ENCODE measurements at regions of chr6 and their contacts with region 1.

Region 1: GRCh38 chr6:169990095-169991030 is 238.9 kb downstream of the ERMARD start:
- DNase-seq: peak; percentile 88
- ATAC-seq: peak; percentile 90
- H3K4me3 Mint-ChIP-seq: peak overlapping the region; percentile 59
- H3K27ac Mint-ChIP-seq: peak overlapping the region; percentile 77
- H3K4me1 Mint-ChIP-seq: peaks cover 27% of the 10 kb centered on the region
- H3K27me3 Mint-ChIP-seq: no peaks in the 10 kb centered on the region
- CTCF ChIP-seq: peak; percentile 30

Region 2: DNA sequence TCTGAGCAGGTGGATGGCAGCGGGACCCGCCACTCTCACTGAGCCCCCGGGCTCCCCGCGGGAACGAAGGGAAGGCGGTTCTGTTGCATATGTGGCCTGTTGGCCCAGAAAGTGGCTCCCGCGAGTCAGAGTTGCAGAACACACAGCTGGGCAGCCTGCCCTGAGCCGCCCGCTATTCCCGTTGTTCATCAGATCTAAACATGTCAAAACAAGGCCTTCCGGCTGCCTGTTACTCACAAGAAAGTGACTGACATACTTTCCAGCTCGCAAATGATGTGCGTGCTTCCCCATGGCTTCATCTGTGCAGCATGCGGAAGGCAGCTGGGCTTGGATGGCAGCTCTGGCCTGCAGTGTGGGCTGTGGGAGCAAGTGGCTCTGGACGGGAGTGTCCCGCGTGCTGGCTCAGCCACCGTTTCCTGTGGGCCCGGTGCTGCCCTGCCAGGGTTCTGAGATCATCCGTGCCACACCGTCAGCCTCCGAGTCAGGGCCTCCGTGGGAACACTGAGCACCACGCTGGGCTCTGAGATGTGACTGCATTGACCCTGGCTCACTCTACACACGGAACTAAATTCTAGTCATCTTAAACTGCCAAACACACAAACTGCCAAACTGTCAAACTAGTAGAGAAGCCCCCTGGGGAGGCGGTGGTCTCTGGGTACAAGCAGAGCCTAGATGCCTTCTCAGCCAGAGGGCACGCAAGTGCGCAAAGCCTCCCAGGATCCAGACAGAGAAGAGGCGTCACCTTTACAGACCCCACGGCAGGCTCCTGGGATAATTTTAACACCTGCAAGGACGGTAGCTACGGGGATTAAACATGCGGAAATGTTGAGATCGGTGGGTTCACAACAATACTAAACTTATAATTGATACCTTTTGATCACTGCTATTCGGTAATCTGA is 11.5 kb before region 1 on chr6:
- CTCF ChIA-PET with region 1: no interaction called
- POLR2A ChIA-PET with region 1: no interaction called
- intact Hi-C with region 1: no loop called
- DNase-seq: no peak
- ATAC-seq: no peak
- H3K4me3 Mint-ChIP-seq: no peak overlapping the region
- H3K27ac Mint-ChIP-seq: no peak overlapping the region
- H3K4me1 Mint-ChIP-seq: peaks cover 2% of the 10 kb centered on the region
- H3K27me3 Mint-ChIP-seq: peaks cover 10% of the 10 kb centered on the region
- CTCF ChIP-seq: no peak

Region 3: DNA sequence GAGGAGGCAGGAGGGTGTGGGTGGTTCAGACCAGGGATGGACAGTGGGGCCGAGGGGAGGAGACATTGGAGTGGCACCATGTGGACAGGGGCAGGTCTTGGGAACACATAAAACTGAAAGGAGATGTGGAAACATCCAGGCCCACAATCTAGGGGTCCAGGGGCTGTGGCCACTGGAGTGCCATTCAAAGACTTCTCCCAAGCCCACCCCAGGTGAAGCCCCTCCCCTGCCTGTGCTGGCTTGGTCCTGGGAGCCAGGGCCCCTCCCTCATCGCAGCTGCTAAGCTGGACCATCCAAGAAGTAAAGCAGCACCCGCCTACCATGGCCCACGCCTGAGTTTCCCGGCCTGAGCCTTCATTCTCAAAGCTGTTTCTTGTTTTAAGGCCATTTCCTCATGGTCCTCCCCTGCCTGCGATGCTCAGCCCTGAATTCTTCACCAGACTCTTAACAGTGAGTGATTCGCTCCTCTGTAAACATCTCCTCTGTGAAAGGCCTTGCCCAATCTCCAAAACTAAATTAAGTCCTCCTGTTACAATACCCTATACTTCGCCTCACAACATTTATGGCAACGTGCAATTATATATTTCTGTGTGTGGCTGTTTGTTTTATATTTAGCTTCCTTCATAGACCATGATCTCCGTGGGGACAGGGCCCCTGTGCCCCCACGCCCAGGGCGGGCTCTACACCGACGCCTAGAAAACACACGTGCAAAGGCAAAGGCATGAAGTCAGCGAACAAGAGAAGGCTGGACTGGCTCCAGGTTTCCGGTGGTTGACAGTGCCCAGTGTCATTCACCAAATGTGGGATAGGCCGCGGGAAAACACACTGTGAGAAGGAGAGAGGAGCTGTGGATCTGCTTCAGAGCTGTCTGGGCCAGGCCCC is 28.8 kb after region 1 on chr6:
- CTCF ChIA-PET with region 1: no interaction called
- POLR2A ChIA-PET with region 1: no interaction called
- intact Hi-C with region 1: no loop called
- DNase-seq: no peak
- ATAC-seq: no peak
- H3K4me3 Mint-ChIP-seq: no peak overlapping the region
- H3K27ac Mint-ChIP-seq: no peak overlapping the region
- H3K4me1 Mint-ChIP-seq: no peaks in the 10 kb centered on the region
- H3K27me3 Mint-ChIP-seq: peaks cover 24% of the 10 kb centered on the region
- CTCF ChIP-seq: no peak

Region 4: DNA sequence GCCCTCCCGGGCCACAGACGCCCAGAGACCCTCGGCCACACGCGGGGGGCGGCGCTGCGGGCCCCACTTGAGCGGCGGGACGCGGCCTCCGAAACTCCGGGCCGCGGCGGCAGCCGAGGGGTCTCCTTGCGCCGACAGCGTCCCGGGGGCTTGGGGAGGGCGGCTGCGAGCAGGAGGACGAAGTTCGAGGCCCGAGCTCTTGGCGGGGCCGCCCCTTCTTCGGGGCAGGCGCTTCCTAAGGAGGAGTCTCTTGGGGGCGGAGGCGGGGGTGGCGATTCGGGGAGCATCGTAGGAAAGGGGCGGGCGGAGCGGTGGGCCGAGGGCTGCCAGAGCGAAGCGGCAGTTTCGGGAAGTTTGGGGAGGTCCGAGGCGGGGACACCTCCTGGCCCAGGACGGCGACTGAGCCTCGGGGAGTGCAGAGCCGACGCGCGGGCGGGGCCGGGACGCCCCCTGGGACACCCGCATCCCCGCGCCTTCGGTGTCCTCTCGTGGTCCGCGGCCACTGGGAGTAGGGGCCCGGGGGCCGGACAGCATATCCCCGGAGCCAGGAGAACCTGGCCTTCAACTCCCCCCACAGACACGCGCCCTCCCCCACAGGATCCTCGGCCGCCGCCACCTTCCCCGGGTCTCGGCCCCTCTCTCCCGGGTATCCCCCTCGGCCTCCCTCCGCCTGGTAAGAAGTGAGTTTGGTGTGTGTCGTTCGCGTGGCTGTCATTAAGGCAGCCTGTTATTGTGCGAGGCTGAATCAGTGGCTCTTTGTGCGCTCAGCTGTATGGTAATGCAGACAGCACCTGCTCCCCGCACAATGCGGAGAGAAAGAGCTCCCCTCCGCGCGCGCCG is 301.1 kb after region 1 on chr6:
- CTCF ChIA-PET with region 1: no interaction called
- POLR2A ChIA-PET with region 1: interaction called, 3 read pairs
- intact Hi-C with region 1: loop called (anchors 5 kb)
- DNase-seq: peak; percentile 68
- ATAC-seq: peak; percentile 50
- H3K4me3 Mint-ChIP-seq: peak overlapping the region; percentile 73
- H3K27ac Mint-ChIP-seq: no peak overlapping the region
- H3K4me1 Mint-ChIP-seq: peaks cover 40% of the 10 kb centered on the region
- H3K27me3 Mint-ChIP-seq: peaks cover 41% of the 10 kb centered on the region
- CTCF ChIP-seq: no peak

Measured in activated CD8-positive, alpha-beta T cell treated with anti-CD3 and anti-CD28 coated beads for 36 hours (primary cell).